ENCODE measurements at regions of chr22 and their contacts with region 1.

Region 1: DNA sequence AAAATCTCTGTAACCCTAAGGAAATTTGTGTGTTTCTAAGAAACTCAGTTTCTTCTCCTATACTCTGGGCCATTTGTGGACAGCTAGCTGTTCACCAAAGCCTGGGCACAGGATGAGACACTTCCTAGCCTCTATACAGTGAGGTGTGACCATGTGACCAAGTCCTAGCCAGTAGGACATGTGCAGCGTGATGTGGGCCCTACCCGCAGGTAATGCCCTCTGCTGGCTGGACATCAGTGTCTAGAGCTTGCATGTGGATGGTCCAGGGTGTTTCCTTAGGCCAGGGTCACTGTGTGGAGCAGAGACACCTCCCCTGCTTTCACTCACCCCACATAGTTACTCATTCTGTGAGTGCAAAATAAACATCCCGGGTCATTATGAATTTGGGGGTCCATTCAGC is 100.5 kb downstream of the LARGE1 start:
- DNase-seq: no peak
- H3K4me3 ChIP-seq: no peak overlapping the region
- H3K27ac ChIP-seq: no peak overlapping the region
- H3K4me1 ChIP-seq: peaks cover 3 to 21% (median 11%) of the 10 kb centered on the region in 4 experiments; a peak in 5 of 7 replicates
- H3K27me3 ChIP-seq: no peaks in the 10 kb centered on the region; a peak in 1 of 7 replicates
- CTCF ChIP-seq: peak in 1 of 3 experiments; percentile 29; a peak in 2 of 4 replicates
- EP300 ChIP-seq: no peak
- POLR2A ChIP-seq: no peak
- RAD21 ChIP-seq: peak; percentile 4 to 43; a peak in 2 of 4 replicates

Region 2: DNA sequence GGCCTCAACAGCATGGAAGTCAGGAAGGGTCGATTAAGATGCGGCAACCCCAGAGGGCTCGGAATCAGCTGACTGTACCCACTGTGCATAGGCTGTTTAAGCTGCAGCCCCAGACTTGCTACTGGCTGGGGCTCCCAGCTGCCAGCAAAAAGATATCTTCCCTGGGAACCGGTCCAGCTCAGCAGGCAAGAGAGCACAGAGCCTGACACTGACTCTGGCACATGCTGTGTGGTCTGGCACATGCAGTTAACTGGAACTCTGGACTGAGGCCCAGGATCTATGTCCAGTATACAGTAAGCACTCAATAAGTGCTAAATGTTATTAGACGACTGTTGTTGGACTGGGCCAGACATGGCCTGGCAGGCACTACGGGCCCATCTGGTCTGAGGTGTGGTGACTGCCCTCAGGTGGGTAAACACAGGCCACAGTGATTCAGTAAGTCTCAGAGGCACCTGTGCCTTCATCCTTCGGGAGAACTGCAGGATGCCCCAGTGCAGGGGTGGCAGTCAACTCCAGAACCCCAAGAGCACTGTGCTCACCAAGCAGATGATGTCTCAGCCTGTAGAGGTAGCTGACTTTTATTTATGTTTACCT is 12.9 kb after region 1 on chr22:
- CTCF ChIA-PET with region 1: interaction called, 15 read pairs
- POLR2A ChIA-PET with region 1: interaction called, 6 read pairs
- DNase-seq: no peak
- H3K4me3 ChIP-seq: no peak overlapping the region
- H3K27ac ChIP-seq: no peak overlapping the region
- H3K4me1 ChIP-seq: peaks cover 15 to 52% (median 32%) of the 10 kb centered on the region in 4 experiments
- H3K27me3 ChIP-seq: no peaks in the 10 kb centered on the region
- CTCF ChIP-seq: no peak
- EP300 ChIP-seq: no peak
- POLR2A ChIP-seq: no peak
- RAD21 ChIP-seq: no peak

Measured in H1 (cell line).